Esophagus muscularis mucosa (tissue), 4 donors: ENCODE measurements at regions of chr1 and their contacts with region 1.

Region 1: GRCh38 chr1:205255941-205256780 is 28.4 kb downstream of the TMCC2 start:
- DNase-seq: peak; percentile 98
- H3K4me3 ChIP-seq: no peak overlapping the region
- H3K27ac ChIP-seq: no peak overlapping the region
- H3K4me1 ChIP-seq: peaks cover 29 to 48% (median 42%) of the 10 kb centered on the region in 4 donors
- H3K27me3 ChIP-seq: no peaks in the 10 kb centered on the region
- CTCF ChIP-seq: peak in 2 of 3 experiments; percentile 94 to 98
- EP300 ChIP-seq: no peak
- POLR2A ChIP-seq: no peak

Region 2: DNA sequence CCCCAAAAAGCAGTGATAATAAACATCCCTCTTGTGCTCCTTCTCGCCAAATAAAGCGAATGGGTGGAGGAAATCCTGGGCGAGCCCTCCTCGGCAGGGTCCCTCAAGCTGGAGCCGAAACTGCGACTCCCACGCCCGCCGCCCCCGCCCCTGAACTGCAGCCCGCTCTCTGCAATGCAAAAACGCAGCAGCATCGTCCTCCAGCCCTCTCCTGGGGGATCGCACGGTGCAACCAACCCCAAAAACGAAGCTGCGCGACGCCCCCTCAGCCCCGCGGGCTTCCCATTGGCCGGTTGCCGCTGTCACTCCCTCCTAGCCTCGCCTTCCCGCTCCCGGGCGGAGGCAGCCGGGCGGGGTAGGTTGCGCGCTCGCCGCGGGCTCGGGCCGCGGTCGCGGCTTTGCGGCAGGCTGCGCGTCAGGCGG is 28.6 kb before region 1 on chr1 and contains the start of gene TMCC2:
- intact Hi-C with region 1: loop called (anchors 2 kb)
- DNase-seq: peak; percentile 92
- H3K4me3 ChIP-seq: peak within 1 kb of the TSS; percentile 60 to 81 (median 65)
- H3K27ac ChIP-seq: peak within 1 kb of the TSS; percentile 17 to 64 (median 42)
- H3K4me1 ChIP-seq: peaks cover 19 to 40% (median 35%) of the 10 kb centered on the region in 4 donors
- H3K27me3 ChIP-seq: no peaks in the 10 kb centered on the region
- CTCF ChIP-seq: no peak
- EP300 ChIP-seq: no peak
- POLR2A ChIP-seq: no peak
- total RNA-seq, gene TMCC2: 4.1 to 8.2 (median 5.9) TPM

Region 3: DNA sequence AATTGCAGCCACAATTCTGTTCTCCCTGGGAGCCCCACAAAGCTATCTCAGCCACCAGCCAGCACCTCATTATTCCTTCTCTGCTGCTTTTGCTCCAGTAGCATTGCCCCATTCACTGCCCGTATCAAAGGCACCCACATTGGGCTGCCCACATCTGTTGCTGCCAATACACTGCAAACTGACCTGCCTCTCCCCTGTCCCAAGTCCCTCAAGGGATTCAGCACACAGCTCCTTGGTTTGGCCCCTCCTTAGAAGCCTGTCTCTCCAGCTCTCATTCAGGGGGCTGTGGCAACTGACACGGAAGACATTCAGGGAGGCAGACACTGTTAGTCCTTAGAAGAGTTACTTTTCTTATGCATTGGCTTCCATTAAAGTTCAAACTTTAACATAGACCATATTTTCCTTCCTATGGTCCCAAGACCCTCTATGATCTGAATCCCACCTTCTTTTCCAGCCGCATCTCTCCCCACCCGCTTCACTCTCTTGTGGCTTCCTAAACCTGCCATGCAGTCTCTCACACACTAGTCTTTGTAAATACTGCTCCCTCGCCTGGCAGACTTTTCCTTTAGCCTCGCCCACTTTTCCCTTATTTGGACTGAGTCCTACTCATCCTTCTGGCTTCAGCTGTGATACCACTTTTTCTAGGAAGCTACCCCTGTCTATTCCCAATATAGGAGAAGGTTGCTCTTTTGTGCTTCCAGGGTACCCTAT is 119.8 kb after region 1 on chr1:
- intact Hi-C with region 1: no loop called
- DNase-seq: peak; percentile 88
- H3K4me3 ChIP-seq: no peak overlapping the region
- H3K27ac ChIP-seq: no peak overlapping the region
- H3K4me1 ChIP-seq: peaks cover 4 to 27% (median 19%) of the 10 kb centered on the region in 4 donors
- H3K27me3 ChIP-seq: peaks cover 0 to 42% (median 5%) of the 10 kb centered on the region in 4 donors
- CTCF ChIP-seq: no peak
- EP300 ChIP-seq: no peak
- POLR2A ChIP-seq: no peak

Region 4: DNA sequence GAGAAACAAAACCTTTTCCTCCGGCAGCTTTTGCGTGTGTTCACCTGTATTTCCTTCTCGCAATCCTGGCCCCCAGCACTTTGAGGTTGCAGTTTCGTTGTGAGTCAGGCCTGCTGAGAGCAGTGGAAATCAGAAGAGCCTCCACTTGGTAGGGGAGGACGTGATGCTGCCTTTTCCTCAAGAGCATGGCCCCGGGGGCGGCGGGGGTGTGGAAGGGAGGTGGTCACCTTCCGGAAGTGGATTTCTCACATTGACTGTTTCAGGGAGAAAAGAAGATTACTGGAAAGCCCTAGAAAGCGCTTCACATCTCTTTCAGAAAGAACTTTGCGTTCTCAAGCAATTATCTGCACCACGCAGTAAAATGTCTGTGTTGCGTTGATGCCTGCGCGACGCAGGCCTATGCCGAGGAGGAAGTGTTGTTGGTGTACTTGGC is 1528.3 kb after region 1 on chr1:
- intact Hi-C with region 1: no loop called
- DNase-seq: no peak
- H3K4me3 ChIP-seq: no peak overlapping the region
- H3K27ac ChIP-seq: no peak overlapping the region
- H3K4me1 ChIP-seq: no peaks in the 10 kb centered on the region
- H3K27me3 ChIP-seq: no peaks in the 10 kb centered on the region
- CTCF ChIP-seq: no peak
- EP300 ChIP-seq: no peak
- POLR2A ChIP-seq: no peak